GM12878 (cell line): ENCODE measurements at regions of chrX and their contacts with region 1.

Region 1: DNA sequence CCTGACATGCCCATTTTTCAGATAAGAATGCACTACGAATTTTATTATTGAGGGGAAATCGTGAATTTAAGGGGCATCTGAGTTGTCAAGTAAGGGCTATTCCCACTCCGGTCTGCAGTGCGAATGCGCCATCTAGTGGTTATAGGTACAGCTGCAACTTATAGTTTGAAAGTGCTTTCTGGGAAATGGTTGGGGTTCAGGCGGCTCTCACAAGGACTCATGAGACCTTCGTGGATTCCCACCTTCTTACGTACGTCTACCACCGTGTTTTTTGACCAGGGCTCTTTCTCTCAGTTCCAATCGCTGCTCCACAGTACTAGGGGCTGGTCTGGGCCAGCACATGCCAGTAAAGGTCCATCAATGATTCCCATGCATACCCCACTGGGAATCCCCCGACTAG is 12.3 kb downstream of the MSL3 start:
- DNase-seq: peak; percentile 68
- ATAC-seq: peak; percentile 68
- H3K4me3 ChIP-seq: no peak overlapping the region
- H3K27ac ChIP-seq: peak overlapping the region; percentile 5
- H3K4me1 ChIP-seq: peaks cover 23% of the 10 kb centered on the region
- H3K27me3 ChIP-seq: no peaks in the 10 kb centered on the region
- CTCF ChIP-seq: peak; percentile 86 to 90 (median 90)
- EP300 ChIP-seq: no peak
- POLR2A ChIP-seq: no peak
- RAD21 ChIP-seq: peak; percentile 97

Region 2: GRCh38 chrX:11381464-11381863 is 388.9 kb before region 1 on chrX:
- CTCF ChIA-PET with region 1: interaction called, 3 read pairs
- POLR2A ChIA-PET with region 1: no interaction called
- RAD21 ChIA-PET with region 1: no interaction called
- SMC1A ChIA-PET with region 1: no interaction called
- in situ Hi-C with region 1: no loop called
- intact Hi-C with region 1: loop called (anchors 5 kb)
- DNase-seq: peak; percentile 30
- ATAC-seq: peak; percentile 97
- H3K4me3 ChIP-seq: no peak overlapping the region
- H3K27ac ChIP-seq: no peak overlapping the region
- H3K4me1 ChIP-seq: no peaks in the 10 kb centered on the region
- H3K27me3 ChIP-seq: no peaks in the 10 kb centered on the region
- CTCF ChIP-seq: peak; percentile 64 to 71 (median 70)
- EP300 ChIP-seq: no peak
- POLR2A ChIP-seq: no peak
- RAD21 ChIP-seq: peak; percentile 60

Region 3: DNA sequence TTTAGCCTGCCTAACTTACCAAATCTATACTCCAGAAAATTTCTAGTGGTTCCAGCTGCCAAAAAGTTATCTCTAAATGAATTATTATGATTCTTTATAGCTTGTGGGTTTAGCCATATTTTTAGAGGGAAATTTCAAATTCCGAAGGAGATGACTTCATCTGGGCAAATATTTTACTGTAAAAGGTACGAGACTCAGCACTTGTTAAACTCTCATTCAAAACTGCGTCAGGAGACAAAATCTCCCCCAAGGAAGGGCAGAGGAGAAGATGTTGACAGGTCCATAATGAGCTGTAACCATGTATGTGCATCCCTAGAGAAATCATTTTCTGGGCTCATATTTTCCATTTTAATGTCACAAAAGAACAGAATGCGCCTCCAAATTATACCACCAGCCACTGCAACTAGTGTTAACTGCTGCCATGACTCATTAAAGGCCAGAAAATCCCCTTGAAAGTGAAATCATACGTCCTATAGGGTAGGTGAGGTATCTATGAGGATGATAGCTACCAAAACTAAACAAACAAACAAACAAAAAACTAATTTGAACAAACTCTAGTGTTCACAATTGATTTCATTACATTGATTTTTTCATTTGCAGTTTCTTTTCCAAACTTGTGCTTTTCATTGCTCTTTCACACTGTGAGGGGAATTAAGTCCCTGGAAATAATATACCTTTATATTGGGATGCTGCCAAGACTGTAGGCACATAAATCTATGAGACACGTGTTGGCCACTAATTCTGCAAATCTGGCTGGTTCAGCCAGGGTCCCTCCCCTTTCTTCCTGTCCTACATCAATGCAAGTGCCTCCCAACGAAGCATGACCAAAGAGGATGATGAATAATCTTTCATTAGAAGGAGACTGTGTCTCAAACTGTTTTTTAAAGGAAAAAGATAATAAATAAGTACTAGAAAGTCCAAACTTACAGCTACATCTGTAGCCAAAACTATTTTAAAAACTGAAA is 190.4 kb before region 1 on chrX:
- CTCF ChIA-PET with region 1: interaction called, 13 read pairs
- POLR2A ChIA-PET with region 1: interaction called, 8 read pairs
- RAD21 ChIA-PET with region 1: interaction called, 16 read pairs
- SMC1A ChIA-PET with region 1: interaction called, 17 read pairs
- in situ Hi-C with region 1: no loop called
- intact Hi-C with region 1: no loop called
- DNase-seq: no peak
- ATAC-seq: peak; percentile 81
- H3K4me3 ChIP-seq: no peak overlapping the region
- H3K27ac ChIP-seq: no peak overlapping the region
- H3K4me1 ChIP-seq: no peaks in the 10 kb centered on the region
- H3K27me3 ChIP-seq: no peaks in the 10 kb centered on the region
- CTCF ChIP-seq: no peak
- EP300 ChIP-seq: no peak
- POLR2A ChIP-seq: no peak
- RAD21 ChIP-seq: no peak

Region 4: DNA sequence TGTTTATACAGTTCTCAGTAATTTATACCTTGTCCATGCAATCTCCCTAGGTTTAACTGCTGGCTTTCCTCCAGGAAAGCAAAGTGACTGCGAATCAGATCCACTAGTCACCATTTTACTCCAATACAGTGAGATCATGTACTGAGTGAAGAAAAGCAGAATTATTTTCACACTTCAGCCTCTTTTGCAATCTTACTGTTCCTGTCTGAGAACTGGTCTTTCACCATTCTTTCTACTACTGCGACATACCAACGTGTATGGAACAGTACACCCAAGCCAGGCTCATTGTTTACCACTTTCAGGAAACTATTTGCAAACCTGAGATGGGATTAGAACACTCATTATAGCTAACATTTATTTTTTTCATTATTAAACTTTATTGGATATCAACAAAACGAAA is 20.3 kb before region 1 on chrX:
- CTCF ChIA-PET with region 1: interaction called, 8 read pairs
- POLR2A ChIA-PET with region 1: interaction called, 15 read pairs
- RAD21 ChIA-PET with region 1: interaction called, 89 read pairs
- SMC1A ChIA-PET with region 1: interaction called, 57 read pairs
- in situ Hi-C with region 1: no loop called
- intact Hi-C with region 1: no loop called
- DNase-seq: no peak
- ATAC-seq: no peak
- H3K4me3 ChIP-seq: no peak overlapping the region
- H3K27ac ChIP-seq: no peak overlapping the region
- H3K4me1 ChIP-seq: no peaks in the 10 kb centered on the region; the same call in 1 of the 2 replicates
- H3K27me3 ChIP-seq: no peaks in the 10 kb centered on the region
- CTCF ChIP-seq: no peak
- EP300 ChIP-seq: no peak
- POLR2A ChIP-seq: no peak
- RAD21 ChIP-seq: no peak

Region 5: GRCh38 chrX:11787564-11787963 is 17.2 kb after region 1 on chrX:
- CTCF ChIA-PET with region 1: interaction called, 226 read pairs
- POLR2A ChIA-PET with region 1: interaction called, 207 read pairs
- RAD21 ChIA-PET with region 1: interaction called, 428 read pairs
- SMC1A ChIA-PET with region 1: interaction called, 404 read pairs
- in situ Hi-C with region 1: no loop called
- intact Hi-C with region 1: loop called (anchors 2 kb)
- DNase-seq: no peak
- ATAC-seq: no peak
- H3K4me3 ChIP-seq: no peak overlapping the region
- H3K27ac ChIP-seq: no peak overlapping the region
- H3K4me1 ChIP-seq: peaks cover 20% of the 10 kb centered on the region
- H3K27me3 ChIP-seq: no peaks in the 10 kb centered on the region
- CTCF ChIP-seq: peak; percentile 22 to 60 (median 33); a peak in 5 of 6 replicates
- EP300 ChIP-seq: no peak
- POLR2A ChIP-seq: no peak
- RAD21 ChIP-seq: peak; percentile 46

Region 6: DNA sequence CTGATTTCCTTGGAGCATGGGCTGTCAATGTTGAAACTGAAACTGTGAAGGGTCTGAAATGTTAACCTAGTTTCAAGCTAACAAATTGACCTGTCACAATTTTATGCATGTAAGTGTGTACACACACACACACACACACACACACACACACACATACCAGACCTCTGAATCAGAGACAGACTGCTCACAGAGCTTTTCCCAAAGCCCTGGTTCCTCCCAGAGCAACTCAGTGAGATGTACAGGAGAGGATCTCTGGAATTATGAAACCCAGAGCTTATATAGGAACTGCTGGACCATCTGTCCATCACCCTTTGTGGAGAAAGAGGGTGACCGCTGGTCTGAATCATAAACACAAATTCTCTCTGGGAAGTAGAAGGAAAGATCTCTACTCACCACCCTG is 792.8 kb after region 1 on chrX:
- CTCF ChIA-PET with region 1: no interaction called
- POLR2A ChIA-PET with region 1: no interaction called
- RAD21 ChIA-PET with region 1: no interaction called
- SMC1A ChIA-PET with region 1: no interaction called
- in situ Hi-C with region 1: no loop called
- intact Hi-C with region 1: no loop called
- DNase-seq: no peak
- ATAC-seq: no peak
- H3K4me3 ChIP-seq: no peak overlapping the region
- H3K27ac ChIP-seq: no peak overlapping the region
- H3K4me1 ChIP-seq: no peaks in the 10 kb centered on the region
- H3K27me3 ChIP-seq: no peaks in the 10 kb centered on the region; a peak in 1 of 4 replicates
- CTCF ChIP-seq: no peak
- EP300 ChIP-seq: no peak
- POLR2A ChIP-seq: no peak
- RAD21 ChIP-seq: no peak

Region 7: GRCh38 chrX:12701628-12702027 is 931.3 kb after region 1 on chrX:
- CTCF ChIA-PET with region 1: interaction called, 3 read pairs
- POLR2A ChIA-PET with region 1: no interaction called
- RAD21 ChIA-PET with region 1: interaction called, 3 read pairs
- SMC1A ChIA-PET with region 1: interaction called, 3 read pairs
- in situ Hi-C with region 1: no loop called
- intact Hi-C with region 1: loop called (anchors 2 kb)
- DNase-seq: peak; percentile 12
- ATAC-seq: peak; percentile 98
- H3K4me3 ChIP-seq: no peak overlapping the region
- H3K27ac ChIP-seq: no peak overlapping the region
- H3K4me1 ChIP-seq: no peaks in the 10 kb centered on the region
- H3K27me3 ChIP-seq: no peaks in the 10 kb centered on the region
- CTCF ChIP-seq: peak; percentile 70 to 84 (median 71)
- EP300 ChIP-seq: no peak
- POLR2A ChIP-seq: no peak
- RAD21 ChIP-seq: peak; percentile 86